ENCODE measurements at regions of chr18 and their contacts with region 1.

Region 1: GRCh38 chr18:58043491-58044379 is at the start of gene NEDD4L:
- DNase-seq: peak; percentile 83
- ATAC-seq: peak; percentile 90
- H3K4me3 Mint-ChIP-seq: peak within 1 kb of the TSS; percentile 77
- H3K27ac Mint-ChIP-seq: no peak within 1 kb of the TSS
- H3K4me1 Mint-ChIP-seq: peaks cover 19% of the 10 kb centered on the region
- H3K27me3 Mint-ChIP-seq: peaks cover 60% of the 10 kb centered on the region
- total RNA-seq, gene NEDD4L: 1.4 to 4.2 TPM

Region 2: GRCh38 chr18:57910817-57911216 is 132.9 kb before region 1 on chr18:
- CTCF ChIA-PET with region 1: no interaction called
- DNase-seq: no peak
- ATAC-seq: no peak
- H3K4me3 Mint-ChIP-seq: no peak overlapping the region
- H3K27ac Mint-ChIP-seq: no peak overlapping the region
- H3K4me1 Mint-ChIP-seq: peaks cover 3% of the 10 kb centered on the region
- H3K27me3 Mint-ChIP-seq: peaks cover 8% of the 10 kb centered on the region

Region 3: DNA sequence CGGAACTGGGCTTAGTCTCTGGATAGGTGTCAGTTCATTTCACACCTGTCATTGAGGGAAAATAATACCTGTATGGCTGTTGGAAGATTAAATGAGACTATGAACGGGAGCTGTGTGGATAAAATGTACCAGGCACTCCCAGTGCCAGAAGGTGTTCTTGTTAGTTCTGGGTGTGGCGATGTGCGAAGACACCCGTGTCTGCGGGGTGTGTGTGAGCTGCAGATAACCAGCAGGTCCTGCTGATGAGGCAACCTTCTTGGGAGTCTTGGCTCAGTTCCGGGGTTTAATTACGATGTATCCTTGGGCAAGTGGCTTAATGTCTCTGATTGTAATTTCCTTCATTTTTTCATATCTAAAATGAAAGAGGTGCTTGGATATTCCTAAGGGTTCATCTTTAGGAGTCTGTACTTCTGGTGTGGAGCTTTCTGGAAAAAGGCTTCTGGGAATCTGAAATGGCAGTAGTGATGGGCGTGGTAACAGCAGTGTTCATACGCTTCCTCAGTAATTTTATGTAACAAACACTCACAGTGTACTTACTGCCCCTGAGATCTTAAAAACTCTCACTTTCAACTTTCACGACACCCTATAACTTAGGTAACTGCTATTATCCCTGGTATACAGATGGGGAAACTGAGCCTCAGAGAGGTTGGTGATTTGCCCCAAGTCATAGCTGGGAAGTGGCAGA is 35.3 kb after region 1 on chr18:
- CTCF ChIA-PET with region 1: no interaction called
- DNase-seq: no peak
- ATAC-seq: no peak
- H3K4me3 Mint-ChIP-seq: no peak overlapping the region
- H3K27ac Mint-ChIP-seq: no peak overlapping the region
- H3K4me1 Mint-ChIP-seq: no peaks in the 10 kb centered on the region
- H3K27me3 Mint-ChIP-seq: peaks cover 4% of the 10 kb centered on the region

Region 4: DNA sequence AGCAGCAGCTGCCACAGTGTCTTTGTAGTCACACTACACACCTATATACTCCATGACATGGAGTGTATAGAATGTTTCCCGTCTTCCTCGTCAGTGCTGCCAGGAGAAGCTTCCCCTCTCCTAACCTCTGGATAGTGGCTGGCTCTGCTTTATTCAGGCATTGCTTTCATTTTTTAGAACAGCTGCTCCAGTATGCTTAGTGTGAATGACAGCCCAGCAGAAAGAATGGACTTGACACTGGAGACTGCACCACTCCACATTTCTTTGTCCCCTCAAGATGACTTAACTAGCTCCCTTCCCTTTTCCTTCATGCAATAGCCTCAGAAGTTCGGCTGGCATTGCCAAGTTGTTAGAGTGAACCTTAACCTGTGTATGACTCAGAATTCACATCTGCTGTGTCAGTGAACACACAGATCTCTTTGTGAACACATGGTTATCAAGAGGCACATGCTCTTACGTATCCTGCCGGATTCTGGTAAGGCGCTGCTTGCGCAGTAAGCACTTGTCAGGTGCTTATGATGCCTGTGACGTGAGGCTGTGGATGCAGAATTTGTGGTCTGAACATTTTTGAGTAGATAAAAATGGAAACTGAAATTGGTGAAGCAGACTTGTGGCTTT is 74.2 kb after region 1 on chr18:
- CTCF ChIA-PET with region 1: interaction called, 25 read pairs
- DNase-seq: no peak
- ATAC-seq: no peak
- H3K4me3 Mint-ChIP-seq: no peak overlapping the region
- H3K27ac Mint-ChIP-seq: no peak overlapping the region
- H3K4me1 Mint-ChIP-seq: peaks cover 5% of the 10 kb centered on the region
- H3K27me3 Mint-ChIP-seq: peaks cover 10% of the 10 kb centered on the region

Region 5: DNA sequence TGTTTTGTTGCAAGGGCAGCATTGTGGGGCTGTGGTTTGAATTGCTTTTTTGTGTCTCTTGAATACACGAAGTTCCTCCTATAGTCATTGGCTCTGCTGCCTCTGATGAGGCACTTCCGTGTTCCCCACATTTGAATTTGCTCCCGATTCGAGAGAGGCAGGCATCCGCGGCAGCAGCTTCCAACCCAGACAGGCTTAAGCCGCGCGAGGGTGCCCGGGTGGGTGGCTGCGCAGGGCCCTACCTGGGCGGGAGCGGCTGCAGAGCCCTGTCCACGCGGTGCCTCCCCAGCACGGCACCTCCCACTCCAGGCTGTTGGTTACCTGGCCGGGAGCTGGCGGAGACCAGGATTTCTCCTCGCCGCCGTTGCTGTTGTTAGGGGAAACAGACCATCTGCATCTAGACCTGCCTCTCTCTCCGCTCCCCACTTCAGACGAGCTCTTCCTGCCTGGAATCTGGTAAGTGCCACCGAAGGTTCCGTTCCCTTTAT is 151.6 kb after region 1 on chr18:
- CTCF ChIA-PET with region 1: no interaction called
- DNase-seq: no peak
- ATAC-seq: peak; percentile 53
- H3K4me3 Mint-ChIP-seq: peak overlapping the region; percentile 39
- H3K27ac Mint-ChIP-seq: no peak overlapping the region
- H3K4me1 Mint-ChIP-seq: peaks cover 4% of the 10 kb centered on the region
- H3K27me3 Mint-ChIP-seq: peaks cover 37% of the 10 kb centered on the region

Region 6: GRCh38 chr18:58552057-58552461 is 508.3 kb after region 1 on chr18:
- CTCF ChIA-PET with region 1: no interaction called
- DNase-seq: no peak
- ATAC-seq: no peak
- H3K4me3 Mint-ChIP-seq: no peak overlapping the region
- H3K27ac Mint-ChIP-seq: no peak overlapping the region
- H3K4me1 Mint-ChIP-seq: peaks cover 8% of the 10 kb centered on the region
- H3K27me3 Mint-ChIP-seq: no peaks in the 10 kb centered on the region